ENCODE measurements at regions of chr11 and their contacts with region 1.

Region 1: GRCh38 chr11:10735481-10736475 is 15.3 kb upstream of the CTR9 start:
- DNase-seq: peak; percentile 95 to 98
- ATAC-seq: peak; percentile 98 to 99 (median 98)
- H3K4me3 ChIP-seq: peak overlapping the region; percentile 34
- H3K27ac ChIP-seq: peak overlapping the region; percentile 82
- H3K4me1 ChIP-seq: peaks cover 5% of the 10 kb centered on the region
- H3K27me3 ChIP-seq: no peaks in the 10 kb centered on the region
- CTCF ChIP-seq: peak; percentile 99

Region 2: DNA sequence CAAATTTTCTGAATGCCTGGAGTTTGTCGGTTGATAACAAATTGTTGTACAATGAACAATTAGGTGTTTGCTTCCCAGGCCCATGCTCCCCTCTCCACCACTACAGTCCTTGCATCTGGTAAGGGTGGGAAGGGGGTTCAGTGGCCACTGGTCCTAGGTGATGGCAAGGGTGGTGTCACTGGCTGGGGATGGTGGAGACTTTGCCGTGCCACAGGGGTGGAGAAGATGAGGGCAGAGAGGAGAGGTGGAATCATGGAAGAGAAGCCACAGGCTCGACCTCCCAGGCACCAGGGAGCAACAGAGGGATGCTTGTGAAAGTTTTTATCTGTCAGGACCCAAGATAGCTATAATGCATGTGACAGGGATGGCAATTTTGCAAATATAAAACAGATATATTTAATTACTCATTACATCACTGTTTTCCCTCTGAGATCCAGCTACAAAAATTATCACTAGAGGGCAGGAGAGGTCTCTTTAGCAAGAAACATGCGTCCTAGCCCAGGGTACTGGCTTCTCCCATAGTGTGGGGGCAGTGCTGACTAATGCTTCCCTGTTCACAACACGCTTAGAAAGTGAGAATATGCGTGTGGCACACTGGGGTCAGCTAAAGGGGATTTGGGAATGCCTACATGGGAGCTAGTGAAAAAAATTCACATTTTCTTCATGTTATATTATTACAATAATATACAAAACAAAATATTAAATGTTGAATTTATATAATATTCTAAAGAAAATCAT is 329.8 kb before region 1 on chr11:
- intact Hi-C with region 1: loop called (anchors 1 to 2 kb)
- DNase-seq: peak; percentile 53 to 70
- ATAC-seq: peak; percentile 79 to 84 (median 82)
- H3K4me3 ChIP-seq: no peak overlapping the region
- H3K27ac ChIP-seq: peak overlapping the region; percentile 69
- H3K4me1 ChIP-seq: peaks cover 30% of the 10 kb centered on the region
- H3K27me3 ChIP-seq: no peaks in the 10 kb centered on the region
- CTCF ChIP-seq: peak; percentile 78

Region 3: DNA sequence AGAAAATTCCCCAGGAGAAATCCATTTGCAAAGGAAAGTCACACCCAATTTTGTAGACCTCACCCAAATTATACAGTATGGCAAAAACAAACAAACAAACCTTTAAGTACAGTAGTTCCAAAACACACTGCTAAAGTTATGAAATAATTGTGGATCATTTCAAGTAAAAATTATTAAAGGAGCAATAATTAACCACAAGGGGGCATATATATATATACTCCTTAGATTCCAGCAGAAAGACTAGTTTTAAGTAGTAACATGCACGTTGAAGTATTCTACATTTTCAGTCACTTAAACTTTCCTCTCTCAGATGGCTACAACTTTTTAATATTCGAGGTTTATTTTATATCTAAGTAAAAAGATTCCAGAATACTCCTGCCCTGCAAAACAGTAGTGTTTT is 221.6 kb before region 1 on chr11:
- intact Hi-C with region 1: loop called in 1 of 2 experiments (anchors 10 kb)
- DNase-seq: no peak
- ATAC-seq: no peak
- H3K4me3 ChIP-seq: no peak overlapping the region
- H3K27ac ChIP-seq: no peak overlapping the region
- H3K4me1 ChIP-seq: peaks cover 9% of the 10 kb centered on the region
- H3K27me3 ChIP-seq: no peaks in the 10 kb centered on the region
- CTCF ChIP-seq: peak; percentile 31

Region 4: DNA sequence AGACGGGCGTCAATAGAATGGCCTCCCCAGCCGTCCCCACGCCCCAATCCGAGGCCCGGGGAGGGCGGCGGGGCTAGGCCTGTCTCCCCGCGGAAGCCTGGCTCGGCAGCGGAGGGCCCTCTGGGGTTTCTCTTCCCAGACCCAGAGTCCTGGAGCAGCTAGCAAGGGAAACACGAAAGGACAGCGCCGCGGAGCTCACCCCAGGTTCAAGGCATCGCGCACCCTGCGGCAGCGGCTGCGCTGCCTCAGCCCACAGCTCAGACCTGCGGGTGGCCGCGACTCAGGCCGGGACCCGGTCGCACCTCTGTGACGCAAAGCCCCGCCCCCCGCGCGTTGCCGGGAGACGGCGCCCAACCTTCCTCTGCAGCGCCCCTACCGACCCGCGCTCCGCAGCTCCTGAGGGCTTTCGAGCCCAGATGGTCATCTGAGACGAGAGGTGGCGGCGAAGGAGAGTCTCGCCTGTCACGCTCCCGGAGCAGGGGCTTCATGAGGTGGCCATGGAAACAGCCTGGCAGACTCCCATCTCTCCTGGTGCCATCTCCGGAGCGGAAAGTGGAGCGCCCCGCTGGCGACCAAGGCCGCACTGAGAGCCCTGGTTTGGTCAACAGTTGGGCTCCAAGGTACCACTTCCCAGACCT is 194.7 kb before region 1 on chr11 and contains the start of gene RNF141:
- intact Hi-C with region 1: loop called in 1 of 2 experiments (anchors 5 kb)
- DNase-seq: peak; percentile 97 to 98
- ATAC-seq: peak; percentile 99 to 100 (median 99)
- H3K4me3 ChIP-seq: peak within 1 kb of the TSS; percentile 82
- H3K27ac ChIP-seq: peak within 1 kb of the TSS; percentile 90
- H3K4me1 ChIP-seq: peaks cover 19% of the 10 kb centered on the region
- H3K27me3 ChIP-seq: no peaks in the 10 kb centered on the region
- CTCF ChIP-seq: peak; percentile 78
- total RNA-seq, gene RNF141: 16.6 to 42.2 (median 36.1) TPM

Region 5: GRCh38 chr11:10564696-10565318 is 171.0 kb before region 1 on chr11:
- intact Hi-C with region 1: loop called (anchors 5 kb)
- DNase-seq: no peak
- ATAC-seq: peak in 1 of 4 donors; percentile 45
- H3K4me3 ChIP-seq: peak overlapping the region; percentile 26
- H3K27ac ChIP-seq: no peak overlapping the region
- H3K4me1 ChIP-seq: peaks cover 6% of the 10 kb centered on the region
- H3K27me3 ChIP-seq: no peaks in the 10 kb centered on the region
- CTCF ChIP-seq: peak; percentile 48

Region 6: DNA sequence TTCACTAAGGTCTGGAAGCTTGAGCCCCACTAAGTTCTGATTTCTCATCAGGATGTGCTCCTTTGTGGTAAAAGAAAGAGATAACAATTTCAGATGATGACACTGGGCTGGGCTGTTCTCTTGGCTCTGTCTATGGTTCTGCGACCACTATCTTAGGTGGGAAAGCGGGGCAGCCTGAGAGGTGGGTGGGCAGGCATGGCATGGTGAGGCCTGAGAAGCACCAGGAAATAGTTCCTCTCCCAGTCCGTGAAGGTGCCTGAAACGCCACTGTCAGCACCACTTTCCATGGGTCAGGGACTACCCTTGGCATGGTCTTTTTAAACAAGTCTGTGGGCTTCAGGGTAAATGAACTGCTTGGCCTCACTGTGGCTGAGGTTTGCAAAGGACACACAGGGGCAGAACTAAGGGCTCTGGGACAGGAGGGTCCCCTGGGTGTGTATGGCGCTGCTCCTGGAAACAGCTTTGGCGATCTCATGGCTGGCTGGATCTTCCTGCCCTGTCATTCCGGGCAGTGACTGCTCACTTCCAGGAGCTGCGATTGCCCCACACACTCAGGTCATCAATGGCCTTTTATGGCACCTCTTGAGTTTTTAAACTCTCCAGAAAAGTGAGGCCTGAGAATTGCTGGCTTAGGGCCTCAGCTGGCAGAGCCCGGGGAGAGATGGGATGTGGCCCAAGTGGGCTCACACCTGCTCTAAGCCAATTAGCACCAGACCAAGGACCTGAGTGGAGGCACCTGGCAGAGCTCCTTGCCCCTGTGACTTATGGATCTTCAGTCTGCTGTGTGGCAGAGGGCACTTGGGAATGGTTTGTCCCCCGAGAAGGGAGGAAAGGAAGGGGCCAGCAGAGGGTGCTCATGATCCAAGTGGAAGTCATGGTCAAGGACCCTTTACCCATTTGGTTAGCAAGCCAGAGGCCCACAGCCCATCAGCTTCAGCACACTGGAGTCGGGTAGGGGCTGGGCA is 111.7 kb before region 1 on chr11:
- intact Hi-C with region 1: loop called (anchors 2 kb)
- DNase-seq: peak in 1 of 2 donors; percentile 43
- ATAC-seq: peak; percentile 44 to 77 (median 66)
- H3K4me3 ChIP-seq: no peak overlapping the region
- H3K27ac ChIP-seq: no peak overlapping the region
- H3K4me1 ChIP-seq: peaks cover 13% of the 10 kb centered on the region
- H3K27me3 ChIP-seq: no peaks in the 10 kb centered on the region
- CTCF ChIP-seq: peak; percentile 48

Region 7: GRCh38 chr11:10674911-10675440 is 60.8 kb before region 1 on chr11:
- intact Hi-C with region 1: loop called (anchors 5 kb)
- DNase-seq: peak; percentile 70 to 89
- ATAC-seq: peak; percentile 94 to 98 (median 96)
- H3K4me3 ChIP-seq: peak overlapping the region; percentile 57
- H3K27ac ChIP-seq: peak overlapping the region; percentile 90
- H3K4me1 ChIP-seq: peaks cover 30% of the 10 kb centered on the region
- H3K27me3 ChIP-seq: no peaks in the 10 kb centered on the region
- CTCF ChIP-seq: no peak

Measured in psoas muscle (tissue), 8 donors.